AG04450 (cell line): ENCODE measurements at regions of chr21 and their contacts with region 1.

Region 1: GRCh38 chr21:29870814-29871213 is 69.0 kb downstream of the GRIK1 start:
- DNase-seq: no peak
- H3K4me3 ChIP-seq: no peak overlapping the region
- H3K27ac ChIP-seq: no peak overlapping the region
- H3K27me3 ChIP-seq: no peaks in the 10 kb centered on the region
- CTCF ChIP-seq: no peak

Region 2: DNA sequence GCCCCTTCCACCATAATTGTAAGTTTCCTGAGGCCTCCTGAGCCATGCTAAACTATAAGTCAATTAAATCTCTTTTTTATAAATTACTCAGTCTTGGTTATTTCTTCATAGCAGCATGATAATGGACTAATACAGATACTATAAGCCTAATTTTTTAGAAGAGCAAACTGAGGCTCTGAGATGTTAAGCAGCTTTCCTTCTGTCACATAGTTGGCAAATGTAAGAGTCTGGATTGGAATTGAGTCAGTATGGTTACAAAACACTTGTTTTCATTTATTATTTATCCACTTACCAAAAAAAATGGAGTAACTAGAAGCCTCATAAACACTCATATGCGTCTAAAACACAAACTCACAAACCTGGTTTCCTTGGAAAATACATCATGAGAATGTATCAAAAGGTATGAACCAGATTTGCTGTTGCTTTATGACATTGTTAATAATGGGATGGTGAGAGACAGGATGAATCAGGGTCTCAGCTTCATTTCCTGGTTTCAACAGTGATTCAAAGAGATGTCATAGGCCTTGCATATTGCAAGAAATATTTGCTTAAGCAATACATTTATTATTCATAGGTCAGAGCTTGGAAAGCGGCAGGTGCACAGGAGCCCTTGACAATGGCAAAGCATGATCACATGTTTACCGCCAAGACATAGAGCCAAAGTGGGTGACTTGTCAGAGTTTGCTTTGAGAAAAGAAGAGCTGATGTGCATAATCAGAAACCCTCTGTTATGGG is 152.6 kb before region 1 on chr21:
- CTCF ChIA-PET with region 1: no interaction called
- POLR2A ChIA-PET with region 1: no interaction called
- DNase-seq: no peak
- H3K4me3 ChIP-seq: no peak overlapping the region
- H3K27ac ChIP-seq: no peak overlapping the region
- H3K27me3 ChIP-seq: no peaks in the 10 kb centered on the region
- CTCF ChIP-seq: no peak

Region 3: DNA sequence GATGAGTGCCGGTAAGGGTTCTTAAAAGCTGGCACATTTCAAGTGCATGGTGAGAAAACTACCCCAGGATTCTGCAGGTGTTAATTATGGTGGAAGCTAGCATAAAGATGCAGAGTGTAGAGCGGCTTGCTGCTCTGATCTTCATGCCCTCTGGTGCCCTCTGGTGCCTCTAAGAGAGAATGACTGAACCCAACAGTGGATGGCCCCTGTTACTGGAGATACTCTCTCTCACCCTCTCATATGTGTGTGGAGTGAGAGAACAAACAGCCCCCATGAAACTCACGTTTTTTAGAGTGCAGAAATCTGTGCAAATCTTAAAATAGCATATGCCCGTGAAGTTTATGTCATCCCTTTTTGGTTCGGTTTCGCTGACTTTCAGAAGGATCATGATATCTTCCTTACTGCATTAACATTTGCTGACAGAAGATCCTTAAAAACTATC is 21.1 kb before region 1 on chr21:
- CTCF ChIA-PET with region 1: interaction called, 11 read pairs
- POLR2A ChIA-PET with region 1: no interaction called
- DNase-seq: peak; percentile 15
- H3K4me3 ChIP-seq: no peak overlapping the region
- H3K27ac ChIP-seq: no peak overlapping the region
- H3K27me3 ChIP-seq: no peaks in the 10 kb centered on the region
- CTCF ChIP-seq: peak; percentile 90